Heart right ventricle (tissue), 16 donors: ENCODE measurements at regions of chr7 and their contacts with region 1.

Region 1: GRCh38 chr7:102152672-102153585 is 133.7 kb upstream of the SH2B2 start:
- DNase-seq: peak; percentile 33 to 48
- ATAC-seq: peak; percentile 56 to 89 (median 86)
- H3K4me3 ChIP-seq: no peak overlapping the region
- H3K27ac ChIP-seq: peak overlapping the region; percentile 44 to 85 (median 72)
- H3K4me1 ChIP-seq: peaks cover 0 to 32% (median 15%) of the 10 kb centered on the region in 9 donors
- H3K27me3 ChIP-seq: no peaks in the 10 kb centered on the region
- CTCF ChIP-seq: no peak

Region 2: GRCh38 chr7:101927802-101928201 is 225.1 kb before region 1 on chr7:
- intact Hi-C with region 1: loop called in 1 of 10 experiments (anchors 1 kb)
- DNase-seq: peak in 1 of 2 donors; percentile 64
- ATAC-seq: peak in 7 of 8 donors; percentile 18 to 62 (median 53)
- H3K4me3 ChIP-seq: peak overlapping the region in 4 of 10 donors; percentile 0 to 27 (median 10)
- H3K27ac ChIP-seq: peak overlapping the region in 9 of 10 donors; percentile 33 to 87 (median 71)
- H3K4me1 ChIP-seq: peaks cover 5 to 44% (median 27%) of the 10 kb centered on the region in 9 donors
- H3K27me3 ChIP-seq: no peaks in the 10 kb centered on the region
- CTCF ChIP-seq: no peak

Region 3: GRCh38 chr7:102170393-102170970 is 17.6 kb after region 1 on chr7:
- intact Hi-C with region 1: no loop called
- DNase-seq: peak in 1 of 2 donors; percentile 13
- ATAC-seq: peak in 6 of 8 donors; percentile 34 to 69 (median 47)
- H3K4me3 ChIP-seq: peak overlapping the region in 6 of 10 donors; percentile 6 to 34 (median 24)
- H3K27ac ChIP-seq: peak overlapping the region in 7 of 10 donors; percentile 5 to 52 (median 16)
- H3K4me1 ChIP-seq: peaks cover 0 to 18% (median 6%) of the 10 kb centered on the region in 9 donors
- H3K27me3 ChIP-seq: no peaks in the 10 kb centered on the region
- CTCF ChIP-seq: no peak

Region 4: GRCh38 chr7:102215256-102215655 is 62.3 kb after region 1 on chr7:
- intact Hi-C with region 1: loop called in 1 of 10 experiments (anchors 5 kb)
- DNase-seq: no peak
- ATAC-seq: no peak
- H3K4me3 ChIP-seq: no peak overlapping the region
- H3K27ac ChIP-seq: no peak overlapping the region
- H3K4me1 ChIP-seq: peaks cover 0 to 22% (median 4%) of the 10 kb centered on the region in 9 donors
- H3K27me3 ChIP-seq: no peaks in the 10 kb centered on the region
- CTCF ChIP-seq: no peak